HCT116 (cell line): ENCODE measurements at regions of chr1 and their contacts with region 1.

Region 1: GRCh38 chr1:106049595-106049994 is 1006.9 kb upstream of the PRMT6 start:
- DNase-seq: no peak
- ATAC-seq: no peak
- H3K4me3 ChIP-seq: no peak overlapping the region
- H3K27ac ChIP-seq: no peak overlapping the region
- H3K4me1 ChIP-seq: no peaks in the 10 kb centered on the region
- H3K27me3 ChIP-seq: no peaks in the 10 kb centered on the region
- CTCF ChIP-seq: no peak
- POLR2A ChIP-seq: no peak
- RAD21 ChIP-seq: no peak

Region 2: GRCh38 chr1:105243969-105244368 is 805.6 kb before region 1 on chr1:
- CTCF ChIA-PET with region 1: no interaction called
- POLR2A ChIA-PET with region 1: no interaction called
- RAD21 ChIA-PET with region 1: no interaction called
- intact Hi-C with region 1: no loop called
- DNase-seq: no peak
- ATAC-seq: no peak
- H3K4me3 ChIP-seq: no peak overlapping the region
- H3K27ac ChIP-seq: no peak overlapping the region
- H3K4me1 ChIP-seq: no peaks in the 10 kb centered on the region
- H3K27me3 ChIP-seq: no peaks in the 10 kb centered on the region
- CTCF ChIP-seq: no peak
- POLR2A ChIP-seq: no peak
- RAD21 ChIP-seq: no peak

Region 3: DNA sequence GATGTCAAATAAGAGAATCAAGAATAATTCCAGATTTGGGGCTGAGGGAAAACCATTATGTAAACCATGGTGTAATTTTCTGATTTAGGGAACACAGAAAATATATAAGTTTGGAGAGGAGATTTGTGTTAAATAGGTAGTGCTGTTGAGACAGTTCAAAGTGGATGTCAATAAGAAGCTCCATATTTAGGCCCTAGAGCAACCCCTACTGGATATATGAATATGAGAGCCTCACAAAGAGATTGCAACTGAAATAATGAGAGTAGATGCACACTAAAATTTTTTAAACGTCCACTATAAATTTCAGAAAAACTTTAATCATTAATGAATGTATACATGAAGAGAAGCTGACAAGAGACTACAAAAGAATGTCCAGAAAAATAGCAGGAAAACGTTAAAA is 440.9 kb before region 1 on chr1:
- CTCF ChIA-PET with region 1: no interaction called
- POLR2A ChIA-PET with region 1: no interaction called
- RAD21 ChIA-PET with region 1: no interaction called
- intact Hi-C with region 1: no loop called
- DNase-seq: no peak
- ATAC-seq: no peak
- H3K4me3 ChIP-seq: no peak overlapping the region
- H3K27ac ChIP-seq: no peak overlapping the region
- H3K4me1 ChIP-seq: no peaks in the 10 kb centered on the region
- H3K27me3 ChIP-seq: no peaks in the 10 kb centered on the region
- CTCF ChIP-seq: no peak
- POLR2A ChIP-seq: no peak
- RAD21 ChIP-seq: no peak

Region 4: DNA sequence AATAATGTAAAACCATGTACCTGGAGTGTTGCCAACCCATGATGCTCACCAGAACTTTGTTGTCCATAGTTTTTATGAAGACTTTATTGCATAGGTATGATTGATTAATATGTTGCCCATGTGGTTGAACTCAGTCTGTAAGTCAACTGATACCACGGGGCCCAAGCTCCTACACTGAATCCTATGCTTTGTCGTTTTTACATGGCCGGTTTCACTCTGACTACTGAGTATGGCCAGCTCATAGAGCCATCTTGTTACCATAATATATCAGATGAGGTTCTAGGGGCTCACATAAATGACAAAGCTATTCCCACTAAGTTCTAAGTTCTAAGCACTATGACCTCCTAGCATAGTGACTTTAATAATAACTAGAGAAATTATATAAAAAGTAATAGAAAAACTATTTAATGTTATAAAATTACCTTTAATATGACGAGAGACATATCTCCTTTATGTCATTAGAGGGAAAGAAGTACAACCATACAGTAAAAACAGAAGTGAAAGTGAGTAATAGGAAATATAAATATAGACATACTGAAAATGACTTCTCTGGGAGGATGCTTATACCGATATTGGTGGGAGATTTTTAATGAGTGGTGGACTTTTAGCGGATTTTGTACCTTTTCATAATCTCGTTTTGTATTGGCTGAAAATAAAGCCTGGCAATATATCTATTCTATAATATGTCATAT is 23.5 kb after region 1 on chr1:
- CTCF ChIA-PET with region 1: no interaction called
- POLR2A ChIA-PET with region 1: no interaction called
- RAD21 ChIA-PET with region 1: no interaction called
- intact Hi-C with region 1: no loop called
- DNase-seq: no peak
- ATAC-seq: no peak
- H3K4me3 ChIP-seq: no peak overlapping the region
- H3K27ac ChIP-seq: no peak overlapping the region
- H3K4me1 ChIP-seq: no peaks in the 10 kb centered on the region
- H3K27me3 ChIP-seq: no peaks in the 10 kb centered on the region
- CTCF ChIP-seq: no peak
- POLR2A ChIP-seq: no peak
- RAD21 ChIP-seq: no peak

Region 5: DNA sequence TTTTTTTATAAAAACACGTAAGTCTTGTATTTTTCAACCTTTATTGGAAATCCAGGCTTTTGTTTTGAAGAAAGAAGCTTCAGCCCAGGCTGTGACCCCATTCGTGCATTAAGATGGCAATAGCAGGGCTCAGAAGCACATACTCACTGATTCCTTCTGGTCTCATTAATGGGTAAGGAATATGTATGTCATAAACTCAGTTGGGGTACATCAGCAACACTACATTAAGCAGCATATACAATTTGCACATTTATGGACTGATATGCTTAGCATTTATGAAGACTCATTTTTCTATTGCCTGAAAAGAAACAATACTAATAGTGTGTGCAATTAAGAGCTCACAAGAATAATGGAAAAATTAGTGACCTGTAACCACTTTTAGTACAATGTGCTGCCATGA is 61.4 kb after region 1 on chr1:
- CTCF ChIA-PET with region 1: no interaction called
- POLR2A ChIA-PET with region 1: no interaction called
- RAD21 ChIA-PET with region 1: no interaction called
- intact Hi-C with region 1: loop called (anchors 10 kb)
- DNase-seq: no peak
- ATAC-seq: no peak
- H3K4me3 ChIP-seq: no peak overlapping the region
- H3K27ac ChIP-seq: no peak overlapping the region
- H3K4me1 ChIP-seq: no peaks in the 10 kb centered on the region
- H3K27me3 ChIP-seq: no peaks in the 10 kb centered on the region
- CTCF ChIP-seq: no peak
- POLR2A ChIP-seq: no peak
- RAD21 ChIP-seq: no peak